Calu3 (cell line): ENCODE measurements at regions of chr1 and their contacts with region 1.

Region 1: GRCh38 chr1:213057264-213058059 is 6.4 kb downstream of the RPS6KC1 start:
- DNase-seq: no peak
- H3K4me3 Mint-ChIP-seq: no peak overlapping the region
- H3K27ac Mint-ChIP-seq: no peak overlapping the region
- H3K4me1 Mint-ChIP-seq: peaks cover 10% of the 10 kb centered on the region
- H3K27me3 Mint-ChIP-seq: no peaks in the 10 kb centered on the region
- CTCF ChIP-seq: no peak

Region 2: GRCh38 chr1:212959266-212960220 is 97.9 kb before region 1 on chr1:
- CTCF ChIA-PET with region 1: no interaction called
- intact Hi-C with region 1: no loop called
- DNase-seq: no peak
- H3K4me3 Mint-ChIP-seq: no peak overlapping the region
- H3K27ac Mint-ChIP-seq: no peak overlapping the region
- H3K4me1 Mint-ChIP-seq: no peaks in the 10 kb centered on the region
- H3K27me3 Mint-ChIP-seq: peaks cover 17% of the 10 kb centered on the region
- CTCF ChIP-seq: no peak

Region 3: GRCh38 chr1:213103377-213104306 is 46.2 kb after region 1 on chr1:
- CTCF ChIA-PET with region 1: no interaction called
- intact Hi-C with region 1: no loop called
- DNase-seq: no peak
- H3K4me3 Mint-ChIP-seq: no peak overlapping the region
- H3K27ac Mint-ChIP-seq: no peak overlapping the region
- H3K4me1 Mint-ChIP-seq: no peaks in the 10 kb centered on the region
- H3K27me3 Mint-ChIP-seq: no peaks in the 10 kb centered on the region
- CTCF ChIP-seq: no peak

Region 4: GRCh38 chr1:213244664-213245091 is 187.2 kb after region 1 on chr1:
- CTCF ChIA-PET with region 1: no interaction called
- intact Hi-C with region 1: no loop called
- DNase-seq: peak; percentile 64
- H3K4me3 Mint-ChIP-seq: no peak overlapping the region
- H3K27ac Mint-ChIP-seq: no peak overlapping the region
- H3K4me1 Mint-ChIP-seq: no peaks in the 10 kb centered on the region
- H3K27me3 Mint-ChIP-seq: no peaks in the 10 kb centered on the region
- CTCF ChIP-seq: peak; percentile 77

Region 5: DNA sequence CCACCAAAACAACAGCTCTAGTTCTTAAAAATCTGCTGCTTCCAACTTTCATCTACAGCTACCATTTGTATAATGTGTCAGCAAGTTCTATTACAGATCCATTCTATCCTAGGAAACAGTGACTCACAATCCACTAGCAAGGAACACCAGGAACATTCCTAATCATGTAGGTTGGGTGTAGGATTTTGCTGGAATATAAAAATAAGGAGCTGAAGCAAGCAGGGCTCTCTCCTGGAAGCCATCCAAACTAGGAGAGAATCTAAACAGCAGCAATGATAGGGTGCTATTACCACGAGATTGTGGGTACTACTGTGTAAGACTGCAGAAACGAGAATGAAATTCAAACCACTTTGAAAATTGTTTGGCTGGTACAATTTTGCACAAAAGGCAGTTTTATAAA is 1359.0 kb after region 1 on chr1:
- CTCF ChIA-PET with region 1: interaction called, 15 read pairs
- intact Hi-C with region 1: no loop called
- DNase-seq: no peak
- H3K4me3 Mint-ChIP-seq: no peak overlapping the region
- H3K27ac Mint-ChIP-seq: no peak overlapping the region
- H3K4me1 Mint-ChIP-seq: peaks cover 21% of the 10 kb centered on the region
- H3K27me3 Mint-ChIP-seq: no peaks in the 10 kb centered on the region
- CTCF ChIP-seq: no peak